ENCODE measurements at regions of chr1 and their contacts with region 1.

Region 1: DNA sequence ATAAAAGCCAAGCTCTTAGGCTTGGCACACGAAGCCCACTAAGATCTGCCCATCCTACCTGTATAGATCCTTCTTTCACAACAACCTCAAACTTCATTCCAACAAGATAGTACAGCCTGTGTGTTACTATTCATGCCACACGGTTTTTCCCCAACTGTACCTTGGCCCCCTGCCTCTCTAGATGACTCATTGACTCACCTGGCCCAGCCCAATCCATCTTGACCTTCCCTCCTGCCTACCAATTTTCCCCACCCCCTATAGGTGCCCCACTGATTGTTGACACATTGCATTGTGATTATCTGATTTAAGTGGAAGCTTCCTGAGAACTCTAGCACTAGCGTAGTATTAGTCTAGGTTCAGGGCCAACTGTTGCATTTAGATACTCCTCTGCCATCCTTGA is 2.0 kb upstream of the CD101 start:
- DNase-seq: no peak
- H3K4me3 ChIP-seq: no peak overlapping the region
- H3K27ac ChIP-seq: no peak overlapping the region
- H3K4me1 ChIP-seq: no peaks in the 10 kb centered on the region
- H3K27me3 ChIP-seq: no peaks in the 10 kb centered on the region
- CTCF ChIP-seq: no peak
- EP300 ChIP-seq: no peak
- POLR2A ChIP-seq: no peak

Region 2: DNA sequence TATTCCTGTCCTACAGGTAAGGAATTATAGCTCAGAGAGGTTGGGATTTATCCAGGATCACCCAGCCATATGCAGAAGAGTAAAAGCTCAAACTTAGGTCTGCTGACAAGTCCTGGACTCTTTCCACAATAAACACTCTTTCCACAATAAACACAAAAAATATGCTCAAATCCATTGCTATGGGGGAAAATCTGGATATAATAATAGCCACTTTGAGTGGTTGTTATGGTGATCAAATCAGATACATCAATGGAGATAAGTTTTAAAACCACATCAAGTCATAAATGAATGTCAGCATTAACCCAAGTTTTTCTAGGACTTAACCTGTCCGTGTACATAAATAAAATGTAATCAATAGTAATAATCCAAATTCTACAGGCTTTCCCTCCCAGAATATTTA is 38.2 kb after region 1 on chr1:
- intact Hi-C with region 1: loop called in 1 of 4 experiments (anchors 1 kb)
- DNase-seq: no peak
- H3K4me3 ChIP-seq: no peak overlapping the region
- H3K27ac ChIP-seq: no peak overlapping the region
- H3K4me1 ChIP-seq: no peaks in the 10 kb centered on the region
- H3K27me3 ChIP-seq: no peaks in the 10 kb centered on the region
- CTCF ChIP-seq: no peak
- EP300 ChIP-seq: no peak
- POLR2A ChIP-seq: no peak

Measured in ovary (tissue), 10 donors.